Heart right ventricle (tissue), 16 donors: ENCODE measurements at regions of chr3 and their contacts with region 1.

Region 1: DNA sequence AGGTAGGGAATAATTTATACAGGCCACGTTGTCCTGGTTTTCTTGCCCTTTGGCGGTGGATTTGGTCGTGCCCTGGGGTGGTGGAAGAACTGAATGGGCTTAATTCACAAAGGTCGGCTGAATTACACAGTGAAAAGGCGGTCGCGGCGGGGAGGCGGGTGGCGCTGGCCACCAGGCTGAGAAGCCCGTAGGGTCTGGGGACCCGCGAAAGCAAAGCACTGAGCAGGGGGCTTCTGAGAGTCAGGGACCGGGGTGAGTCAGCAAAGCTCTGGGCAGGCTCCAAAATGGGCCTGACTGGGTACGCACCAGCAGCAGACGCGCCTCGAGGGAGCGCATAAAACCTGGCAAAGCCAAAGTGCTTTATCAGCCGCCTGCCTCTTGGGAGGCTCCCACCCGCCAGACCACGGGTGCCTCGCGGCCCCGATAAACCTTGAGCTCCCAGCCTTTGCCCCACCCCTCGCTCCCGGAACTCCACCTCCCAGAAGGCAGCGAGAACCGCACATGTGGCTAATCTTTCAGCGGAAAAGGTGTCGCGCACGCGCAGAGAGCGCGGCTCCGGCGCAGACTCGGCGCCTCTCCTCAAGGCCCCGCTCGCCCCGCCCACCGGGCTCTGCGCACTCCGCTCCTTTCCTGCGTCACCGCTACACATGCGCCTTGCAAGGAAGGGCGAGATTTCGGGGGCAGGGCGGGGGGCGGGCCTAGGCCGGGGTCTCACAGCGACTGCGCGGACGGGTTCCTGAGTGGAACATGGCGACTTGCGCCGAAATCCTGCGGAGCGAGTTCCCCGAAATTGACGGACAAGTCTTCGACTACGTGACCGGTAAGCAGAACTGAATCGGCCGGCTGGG is at the start of gene ABCF3:
- DNase-seq: peak; percentile 99 to 100
- ATAC-seq: peak; percentile 96 to 99 (median 98)
- H3K4me3 ChIP-seq: peak within 1 kb of the TSS; percentile 72 to 99 (median 92)
- H3K27ac ChIP-seq: peak within 1 kb of the TSS; percentile 68 to 96 (median 92)
- H3K4me1 ChIP-seq: peaks cover 11 to 35% (median 30%) of the 10 kb centered on the region in 9 donors
- H3K27me3 ChIP-seq: no peaks in the 10 kb centered on the region
- CTCF ChIP-seq: no peak
- total RNA-seq, gene ABCF3: 60.1 to 90.7 (median 68.3) TPM

Region 2: DNA sequence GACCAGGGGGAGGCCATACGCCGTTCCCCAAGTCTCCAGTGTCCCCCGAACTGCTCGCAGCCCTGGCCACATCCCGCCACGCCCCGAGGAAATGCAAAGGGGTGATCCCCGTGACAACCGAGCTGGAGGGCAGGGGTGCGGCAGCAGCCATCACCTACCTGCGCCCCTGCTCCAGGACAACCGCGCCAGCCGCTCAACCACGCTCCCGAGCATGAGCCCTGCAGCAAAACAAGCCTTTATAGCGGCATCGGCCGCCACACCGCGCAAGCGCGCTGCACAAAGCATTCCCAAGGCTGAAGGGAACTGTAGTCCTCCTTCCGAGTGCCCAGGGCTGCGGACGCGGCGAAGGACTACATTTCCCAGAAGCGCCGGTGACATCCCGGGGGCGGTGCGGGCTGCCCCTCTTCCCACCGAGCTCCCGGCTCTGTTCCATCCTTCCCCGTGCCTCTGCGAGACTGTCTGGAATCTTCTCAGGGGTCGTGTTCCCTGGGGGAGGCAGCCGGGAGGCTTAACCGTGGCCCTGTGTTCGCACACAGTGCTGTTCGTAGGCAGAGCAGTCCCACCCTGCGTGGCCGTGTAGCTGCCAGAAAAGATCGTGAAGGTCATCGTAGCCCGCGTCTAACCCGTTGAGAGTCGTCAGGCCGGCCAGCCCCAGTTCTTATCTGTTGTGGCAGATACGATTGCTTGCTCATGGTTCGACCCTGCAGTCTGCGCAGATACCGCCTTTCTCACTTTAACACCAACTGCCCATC is 167.8 kb before region 1 on chr3 and contains the start of gene ABCC5:
- intact Hi-C with region 1: loop called in 1 of 10 experiments (anchors 5 kb)
- DNase-seq: peak; percentile 94
- ATAC-seq: peak; percentile 95 to 99 (median 98)
- H3K4me3 ChIP-seq: peak within 1 kb of the TSS; percentile 82 to 100 (median 94)
- H3K27ac ChIP-seq: peak within 1 kb of the TSS; percentile 57 to 91 (median 85)
- H3K4me1 ChIP-seq: peaks cover 0 to 42% (median 21%) of the 10 kb centered on the region in 9 donors
- H3K27me3 ChIP-seq: no peaks in the 10 kb centered on the region
- CTCF ChIP-seq: peak in 8 of 9 donors; percentile 2 to 60 (median 54)
- total RNA-seq, gene ABCC5: 26.0 to 89.6 (median 40.9) TPM

Region 3: GRCh38 chr3:184145111-184145524 is 40.6 kb before region 1 on chr3:
- intact Hi-C with region 1: loop called in 2 of 10 experiments (anchors 5 kb)
- DNase-seq: peak; percentile 36 to 49
- ATAC-seq: peak; percentile 45 to 78 (median 70)
- H3K4me3 ChIP-seq: no peak overlapping the region
- H3K27ac ChIP-seq: peak overlapping the region in 1 of 10 donors; percentile 25
- H3K4me1 ChIP-seq: peaks cover 0 to 10% (median 0%) of the 10 kb centered on the region in 9 donors
- H3K27me3 ChIP-seq: no peaks in the 10 kb centered on the region
- CTCF ChIP-seq: peak in 8 of 9 donors; percentile 18 to 56 (median 45)

Region 4: DNA sequence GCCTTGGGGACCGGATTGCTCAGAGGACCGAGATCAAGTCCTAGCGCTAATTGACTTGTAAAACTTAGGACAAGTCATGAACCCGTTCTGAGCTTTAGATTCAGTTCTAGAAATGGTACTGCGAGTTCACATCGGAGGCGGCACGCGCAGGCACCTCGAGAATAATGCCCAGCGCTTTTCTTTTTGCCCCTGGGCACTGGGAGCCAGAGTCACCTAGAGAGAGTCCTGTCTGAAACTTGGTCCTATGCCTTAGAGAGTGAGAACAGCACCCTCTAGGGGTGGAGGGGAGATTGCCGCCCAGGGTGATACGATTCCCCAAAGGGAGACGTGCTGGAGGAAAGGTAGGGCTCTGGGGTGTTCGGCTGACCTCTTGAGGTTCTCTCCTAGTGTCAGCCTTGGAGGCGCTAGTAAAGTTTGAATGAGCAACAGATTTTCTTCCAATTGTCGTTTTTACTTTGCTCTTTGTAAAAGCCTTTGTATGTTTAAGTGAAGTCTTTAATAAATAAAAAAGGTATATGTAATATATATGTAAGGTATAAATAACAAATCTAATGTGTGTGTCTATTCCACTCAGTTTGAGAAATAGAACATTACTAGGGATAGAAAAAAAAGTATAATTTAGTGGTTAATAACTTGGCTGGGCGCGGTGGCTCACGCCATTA is 64.6 kb after region 1 on chr3:
- intact Hi-C with region 1: loop called in 6 of 10 experiments (anchors 2 to 10 kb)
- DNase-seq: peak; percentile 80 to 85
- ATAC-seq: peak; percentile 71 to 90 (median 85)
- H3K4me3 ChIP-seq: peak overlapping the region; percentile 63 to 92 (median 82)
- H3K27ac ChIP-seq: peak overlapping the region in 9 of 10 donors; percentile 77 to 94 (median 83)
- H3K4me1 ChIP-seq: peaks cover 0 to 23% (median 18%) of the 10 kb centered on the region in 9 donors
- H3K27me3 ChIP-seq: no peaks in the 10 kb centered on the region
- CTCF ChIP-seq: peak; percentile 86 to 97 (median 93)

Region 5: DNA sequence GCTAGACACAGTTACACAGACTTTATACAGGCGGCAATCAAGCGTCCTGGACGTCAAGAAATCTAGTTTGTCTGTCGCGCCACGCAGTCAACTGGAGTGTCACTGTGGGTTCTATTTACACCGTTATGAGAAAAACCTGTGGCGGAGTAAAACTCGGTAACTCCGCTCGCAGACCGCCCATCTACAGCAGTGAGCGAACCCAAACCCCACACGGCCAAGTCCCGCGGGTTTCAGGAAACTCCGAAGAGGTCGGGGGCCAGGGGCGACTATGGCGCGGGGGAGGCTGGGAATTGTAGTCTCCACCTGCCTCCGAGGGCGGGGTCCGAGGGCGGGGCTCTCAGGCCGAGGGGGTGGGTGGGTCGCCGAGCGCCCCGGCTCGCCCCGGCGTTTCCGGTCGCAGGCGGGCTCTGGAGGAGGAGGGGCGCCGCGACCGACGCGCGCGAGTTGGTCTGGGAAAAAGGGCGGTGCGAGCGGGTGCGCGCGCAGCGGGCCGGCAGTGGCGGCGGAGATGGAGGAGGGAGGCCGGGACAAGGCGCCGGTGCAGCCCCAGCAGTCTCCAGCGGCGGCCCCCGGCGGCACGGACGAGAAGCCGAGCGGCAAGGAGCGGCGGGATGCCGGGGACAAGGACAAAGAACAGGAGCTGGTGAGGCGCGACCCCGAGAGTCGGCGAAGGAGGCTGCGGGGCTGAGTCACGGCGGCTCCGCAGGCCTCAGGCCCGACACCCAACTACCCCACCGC is 113.2 kb after region 1 on chr3 and contains the start of gene PSMD2:
- intact Hi-C with region 1: loop called in 1 of 10 experiments (anchors 5 kb)
- DNase-seq: peak; percentile 98
- ATAC-seq: peak; percentile 99 to 100 (median 99)
- H3K4me3 ChIP-seq: peak within 1 kb of the TSS; percentile 67 to 100 (median 92)
- H3K27ac ChIP-seq: peak within 1 kb of the TSS; percentile 46 to 93 (median 83)
- H3K4me1 ChIP-seq: peaks cover 5 to 24% (median 16%) of the 10 kb centered on the region in 9 donors
- H3K27me3 ChIP-seq: no peaks in the 10 kb centered on the region
- CTCF ChIP-seq: no peak
- total RNA-seq, gene PSMD2: 210 to 254 (median 231) TPM

Region 6: GRCh38 chr3:184314363-184314699 is 128.6 kb after region 1 on chr3 and contains the start of gene EIF4G1:
- intact Hi-C with region 1: loop called in 1 of 10 experiments (anchors 10 kb)
- DNase-seq: peak; percentile 94 to 96
- ATAC-seq: peak; percentile 84 to 94 (median 88)
- H3K4me3 ChIP-seq: peak within 1 kb of the TSS; percentile 68 to 95 (median 85)
- H3K27ac ChIP-seq: peak within 1 kb of the TSS; percentile 96 to 100 (median 98)
- H3K4me1 ChIP-seq: peaks cover 24 to 48% (median 42%) of the 10 kb centered on the region in 9 donors
- H3K27me3 ChIP-seq: no peaks in the 10 kb centered on the region
- CTCF ChIP-seq: no peak
- total RNA-seq, gene EIF4G1: 203 to 316 (median 209) TPM

Region 7: GRCh38 chr3:184335661-184336546 is 150.2 kb after region 1 on chr3:
- intact Hi-C with region 1: loop called in 1 of 10 experiments (anchors 10 kb)
- DNase-seq: peak; percentile 88 to 91
- ATAC-seq: peak; percentile 63 to 75 (median 68)
- H3K4me3 ChIP-seq: peak overlapping the region; percentile 51 to 96 (median 82)
- H3K27ac ChIP-seq: peak overlapping the region; percentile 81 to 99 (median 96)
- H3K4me1 ChIP-seq: peaks cover 18 to 65% (median 45%) of the 10 kb centered on the region in 9 donors
- H3K27me3 ChIP-seq: no peaks in the 10 kb centered on the region
- CTCF ChIP-seq: no peak